PC-9 (cell line): ENCODE measurements at regions of chr2 and their contacts with region 1.

Region 1: GRCh38 chr2:170396799-170397459 is 219.0 kb downstream of the MYO3B start:
- DNase-seq: no peak
- H3K4me3 ChIP-seq: no peak overlapping the region
- H3K27ac ChIP-seq: no peak overlapping the region
- H3K4me1 ChIP-seq: no peaks in the 10 kb centered on the region
- H3K27me3 ChIP-seq: no peaks in the 10 kb centered on the region
- CTCF ChIP-seq: peak; percentile 62

Region 2: GRCh38 chr2:170221317-170222288 is 175.3 kb before region 1 on chr2:
- CTCF ChIA-PET with region 1: no interaction called
- POLR2A ChIA-PET with region 1: no interaction called
- intact Hi-C with region 1: no loop called
- DNase-seq: no peak
- H3K4me3 ChIP-seq: no peak overlapping the region
- H3K27ac ChIP-seq: no peak overlapping the region
- H3K4me1 ChIP-seq: no peaks in the 10 kb centered on the region
- H3K27me3 ChIP-seq: no peaks in the 10 kb centered on the region
- CTCF ChIP-seq: no peak

Region 3: GRCh38 chr2:170369894-170370293 is 27.0 kb before region 1 on chr2:
- CTCF ChIA-PET with region 1: no interaction called
- POLR2A ChIA-PET with region 1: no interaction called
- intact Hi-C with region 1: loop called (anchors 1 kb)
- DNase-seq: no peak
- H3K4me3 ChIP-seq: no peak overlapping the region
- H3K27ac ChIP-seq: no peak overlapping the region
- H3K4me1 ChIP-seq: peaks cover 22% of the 10 kb centered on the region
- H3K27me3 ChIP-seq: no peaks in the 10 kb centered on the region
- CTCF ChIP-seq: peak; percentile 67

Region 4: DNA sequence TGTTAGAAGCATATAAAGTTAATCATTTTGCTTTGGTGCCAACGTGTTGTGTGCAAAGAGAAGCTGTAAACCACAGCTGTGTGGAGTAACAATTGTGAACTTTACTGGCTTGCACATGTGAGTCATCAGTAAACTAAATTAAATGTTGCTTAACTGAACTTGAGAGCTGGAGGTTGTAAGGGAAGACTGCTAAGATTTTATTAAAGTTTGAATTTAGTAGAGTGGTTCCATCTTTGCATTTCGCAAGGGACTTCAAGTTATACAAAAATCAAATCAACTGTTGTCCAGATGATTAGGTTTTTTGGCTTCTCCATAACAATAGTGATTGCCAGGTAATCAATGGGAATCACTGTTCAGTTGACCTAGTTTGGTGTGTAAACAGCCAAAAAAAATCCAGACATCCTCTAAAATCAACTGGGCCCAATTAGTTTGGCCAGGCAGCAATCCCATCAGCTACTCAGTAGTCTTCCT is 28.4 kb after region 1 on chr2:
- CTCF ChIA-PET with region 1: no interaction called
- POLR2A ChIA-PET with region 1: interaction called, 19 read pairs
- intact Hi-C with region 1: no loop called
- DNase-seq: peak in 1 of 2 experiments; percentile 79
- H3K4me3 ChIP-seq: no peak overlapping the region
- H3K27ac ChIP-seq: no peak overlapping the region
- H3K4me1 ChIP-seq: peaks cover 12% of the 10 kb centered on the region
- H3K27me3 ChIP-seq: no peaks in the 10 kb centered on the region
- CTCF ChIP-seq: no peak

Region 5: DNA sequence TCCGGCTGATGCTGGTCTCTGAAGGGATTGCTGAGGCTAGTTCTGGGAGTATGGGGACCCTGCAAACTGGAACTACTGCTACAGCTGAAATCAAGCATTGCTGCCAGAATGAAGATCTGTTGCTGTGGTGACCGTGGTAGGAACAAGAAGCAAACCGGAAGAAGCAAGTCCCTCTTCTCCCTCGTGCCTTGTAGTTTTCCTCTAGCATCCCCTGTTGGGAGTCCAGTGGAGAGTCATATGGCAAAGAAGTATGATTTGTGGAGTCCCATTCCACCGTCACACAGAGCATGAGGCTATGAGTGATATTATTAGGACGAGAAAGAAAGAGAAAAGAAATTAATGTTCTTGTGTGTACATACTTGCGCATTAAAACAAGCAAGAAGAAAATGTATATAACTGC is 179.4 kb after region 1 on chr2:
- CTCF ChIA-PET with region 1: no interaction called
- POLR2A ChIA-PET with region 1: interaction called, 23 read pairs
- intact Hi-C with region 1: no loop called
- DNase-seq: no peak
- H3K4me3 ChIP-seq: no peak overlapping the region
- H3K27ac ChIP-seq: no peak overlapping the region
- H3K4me1 ChIP-seq: no peaks in the 10 kb centered on the region
- H3K27me3 ChIP-seq: no peaks in the 10 kb centered on the region
- CTCF ChIP-seq: no peak

Region 6: DNA sequence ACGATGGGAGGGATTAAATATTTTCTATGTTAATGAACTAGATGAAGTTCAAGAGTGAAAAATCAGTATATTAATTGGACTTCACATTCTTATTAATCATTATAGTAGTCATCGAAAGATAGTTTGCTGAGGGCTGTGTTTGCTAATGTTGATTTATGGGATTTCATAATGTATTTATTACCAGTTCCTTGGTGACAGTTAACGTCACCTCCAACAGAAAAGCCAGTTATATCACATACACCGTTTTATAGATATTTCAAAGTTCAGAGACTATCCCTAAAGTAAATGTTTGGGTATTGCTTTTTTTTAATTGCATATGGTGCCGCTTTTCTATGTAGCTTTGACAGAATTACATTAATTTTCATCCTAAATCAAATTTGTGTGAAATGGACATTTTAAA is 268.8 kb after region 1 on chr2:
- CTCF ChIA-PET with region 1: no interaction called
- POLR2A ChIA-PET with region 1: interaction called, 24 read pairs
- intact Hi-C with region 1: no loop called
- DNase-seq: no peak
- H3K4me3 ChIP-seq: no peak overlapping the region
- H3K27ac ChIP-seq: no peak overlapping the region
- H3K4me1 ChIP-seq: no peaks in the 10 kb centered on the region
- H3K27me3 ChIP-seq: no peaks in the 10 kb centered on the region
- CTCF ChIP-seq: no peak